PC-9 (cell line): ENCODE measurements at regions of chr12 and their contacts with region 1.

Region 1: DNA sequence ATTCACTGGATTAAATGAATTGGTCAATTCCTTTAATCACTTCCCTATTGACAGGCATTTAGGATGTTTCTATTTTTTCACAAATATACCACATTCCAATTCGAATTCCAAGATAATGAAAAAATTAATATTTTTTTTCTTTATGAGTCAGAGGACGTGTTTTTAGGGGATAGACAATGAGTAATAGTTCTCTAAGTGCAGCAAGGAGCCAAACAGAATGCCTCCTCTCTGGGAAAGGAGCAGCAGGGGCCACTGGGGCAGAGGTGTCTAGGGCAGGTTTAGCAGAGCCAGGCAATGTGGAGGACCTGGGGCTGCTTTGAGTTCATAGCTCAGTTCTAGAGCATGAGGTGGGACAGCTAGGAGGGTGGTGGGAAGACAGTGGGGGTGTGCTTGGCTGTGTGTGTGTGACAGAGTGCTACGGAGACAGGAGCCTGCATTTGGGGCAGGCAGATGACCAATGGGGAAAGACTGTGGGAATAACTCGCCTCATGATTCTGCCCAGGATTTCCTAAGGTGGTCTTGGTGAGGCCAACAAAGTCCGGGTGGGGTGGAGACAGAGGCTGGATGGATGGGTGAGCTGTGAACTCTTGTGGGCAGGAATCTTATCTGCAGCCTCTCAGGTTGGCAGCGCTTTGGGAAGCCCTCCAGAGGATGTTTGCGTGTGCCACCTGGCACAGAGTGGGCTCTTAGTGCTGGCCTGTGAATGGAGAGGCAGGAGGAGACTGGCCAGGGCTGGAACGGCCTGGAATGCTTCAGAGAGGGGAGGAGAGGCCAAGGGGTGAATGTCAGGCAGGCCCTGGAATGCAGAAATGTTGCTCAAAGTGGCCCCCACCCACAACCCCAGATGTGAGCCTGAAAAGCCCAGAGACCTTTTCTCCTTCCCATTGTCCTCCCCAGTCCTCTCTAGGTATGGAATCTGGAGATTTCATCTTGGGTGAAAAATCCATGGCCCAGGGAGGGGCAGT is 2.4 kb upstream of the KRT7 start:
- DNase-seq: peak; percentile 85 to 97
- H3K4me3 ChIP-seq: peak overlapping the region; percentile 96
- H3K27ac ChIP-seq: peak overlapping the region; percentile 97
- H3K4me1 ChIP-seq: peaks cover 65% of the 10 kb centered on the region
- H3K27me3 ChIP-seq: no peaks in the 10 kb centered on the region
- CTCF ChIP-seq: no peak

Region 2: GRCh38 chr12:51401020-51401419 is 829.6 kb before region 1 on chr12:
- CTCF ChIA-PET with region 1: no interaction called
- POLR2A ChIA-PET with region 1: interaction called, 10 read pairs
- intact Hi-C with region 1: no loop called
- DNase-seq: no peak
- H3K4me3 ChIP-seq: no peak overlapping the region
- H3K27ac ChIP-seq: no peak overlapping the region
- H3K4me1 ChIP-seq: no peaks in the 10 kb centered on the region; the same call in 1 of the 2 replicates
- H3K27me3 ChIP-seq: no peaks in the 10 kb centered on the region
- CTCF ChIP-seq: no peak

Region 3: GRCh38 chr12:52156736-52157565 is 73.7 kb before region 1 on chr12:
- CTCF ChIA-PET with region 1: interaction called, 4 read pairs
- POLR2A ChIA-PET with region 1: interaction called, 7 read pairs
- intact Hi-C with region 1: loop called (anchors 2 kb)
- DNase-seq: peak; percentile 54 to 82
- H3K4me3 ChIP-seq: no peak overlapping the region
- H3K27ac ChIP-seq: no peak overlapping the region
- H3K4me1 ChIP-seq: peaks cover 58% of the 10 kb centered on the region
- H3K27me3 ChIP-seq: no peaks in the 10 kb centered on the region
- CTCF ChIP-seq: peak; percentile 99

Region 4: GRCh38 chr12:52192173-52192791 is 38.3 kb before region 1 on chr12:
- CTCF ChIA-PET with region 1: interaction called, 3 read pairs
- POLR2A ChIA-PET with region 1: interaction called, 10 read pairs
- intact Hi-C with region 1: loop called (anchors 1 kb)
- DNase-seq: peak; percentile 90 to 98
- H3K4me3 ChIP-seq: peak overlapping the region; percentile 92
- H3K27ac ChIP-seq: peak overlapping the region; percentile 77
- H3K4me1 ChIP-seq: peaks cover 75% of the 10 kb centered on the region
- H3K27me3 ChIP-seq: no peaks in the 10 kb centered on the region
- CTCF ChIP-seq: no peak

Region 5: DNA sequence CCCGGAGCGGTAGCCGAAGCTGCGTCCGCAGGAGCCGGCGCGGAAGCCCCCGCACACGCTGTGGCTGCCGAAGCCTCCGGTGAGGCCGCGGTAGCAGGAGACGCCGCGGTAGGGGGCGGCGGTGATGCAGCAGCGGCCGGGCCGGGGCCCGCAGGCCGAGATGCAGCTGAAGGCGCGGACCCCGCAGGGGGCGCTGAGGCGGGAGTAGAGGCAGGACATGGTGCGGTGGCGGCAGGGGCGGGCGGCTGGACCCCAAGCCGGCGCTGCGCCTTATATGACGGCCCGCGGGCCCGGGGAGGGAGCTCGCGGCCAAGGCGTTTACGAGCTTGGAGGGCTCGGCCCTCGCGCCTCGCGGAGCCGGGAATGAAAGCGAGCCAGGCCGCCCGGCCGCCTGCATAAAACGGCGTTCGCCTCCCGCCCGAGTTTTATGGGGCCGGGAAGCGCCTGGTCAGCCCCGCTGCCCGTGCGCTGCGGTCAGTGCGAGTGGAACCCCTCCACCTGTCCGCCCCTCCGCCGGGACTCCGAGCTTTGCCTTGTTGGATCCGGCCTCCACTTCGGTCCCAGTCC is 27.8 kb after region 1 on chr12:
- CTCF ChIA-PET with region 1: no interaction called
- POLR2A ChIA-PET with region 1: no interaction called
- intact Hi-C with region 1: no loop called
- DNase-seq: no peak
- H3K4me3 ChIP-seq: no peak overlapping the region
- H3K27ac ChIP-seq: no peak overlapping the region
- H3K4me1 ChIP-seq: 0 out of 2 replicates have a peak, but pooled peaks cover 8% of the 10 kb centered on the region
- H3K27me3 ChIP-seq: no peaks in the 10 kb centered on the region
- CTCF ChIP-seq: no peak